Left colon (tissue), 2 donors: ENCODE measurements at regions of chr12 and their contacts with region 1.

Region 1: GRCh38 chr12:34121360-34121759 is 99.1 kb downstream of the ALG10 start:
- DNase-seq: no peak
- ATAC-seq: no peak

Region 2: DNA sequence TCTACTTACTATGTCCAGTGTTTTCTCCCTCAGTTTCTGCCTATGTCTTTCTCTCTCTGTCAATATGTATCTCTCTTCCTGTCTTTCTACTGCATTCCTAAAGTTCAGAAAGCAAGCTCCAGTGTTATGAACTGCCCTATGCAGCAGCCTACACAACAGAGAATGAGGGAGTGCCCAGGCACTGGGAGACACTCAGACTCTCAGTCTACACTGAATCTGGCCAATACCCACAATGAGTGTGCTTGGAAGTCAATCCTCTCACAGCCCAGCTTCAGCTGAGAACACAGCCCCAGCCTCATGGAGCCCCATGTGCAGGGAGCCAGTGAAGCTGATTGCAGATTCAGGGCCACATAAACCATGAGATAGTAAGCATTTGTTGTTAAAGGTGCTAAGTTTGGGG is 29.7 kb after region 1 on chr12:
- intact Hi-C with region 1: no loop called
- DNase-seq: no peak
- ATAC-seq: no peak

Region 3: GRCh38 chr12:34218165-34219045 is 97.0 kb after region 1 on chr12:
- intact Hi-C with region 1: loop called in 1 of 2 experiments (anchors 5 kb)
- DNase-seq: peak in 1 of 2 donors; percentile 59
- ATAC-seq: peak; percentile 74

Region 4: DNA sequence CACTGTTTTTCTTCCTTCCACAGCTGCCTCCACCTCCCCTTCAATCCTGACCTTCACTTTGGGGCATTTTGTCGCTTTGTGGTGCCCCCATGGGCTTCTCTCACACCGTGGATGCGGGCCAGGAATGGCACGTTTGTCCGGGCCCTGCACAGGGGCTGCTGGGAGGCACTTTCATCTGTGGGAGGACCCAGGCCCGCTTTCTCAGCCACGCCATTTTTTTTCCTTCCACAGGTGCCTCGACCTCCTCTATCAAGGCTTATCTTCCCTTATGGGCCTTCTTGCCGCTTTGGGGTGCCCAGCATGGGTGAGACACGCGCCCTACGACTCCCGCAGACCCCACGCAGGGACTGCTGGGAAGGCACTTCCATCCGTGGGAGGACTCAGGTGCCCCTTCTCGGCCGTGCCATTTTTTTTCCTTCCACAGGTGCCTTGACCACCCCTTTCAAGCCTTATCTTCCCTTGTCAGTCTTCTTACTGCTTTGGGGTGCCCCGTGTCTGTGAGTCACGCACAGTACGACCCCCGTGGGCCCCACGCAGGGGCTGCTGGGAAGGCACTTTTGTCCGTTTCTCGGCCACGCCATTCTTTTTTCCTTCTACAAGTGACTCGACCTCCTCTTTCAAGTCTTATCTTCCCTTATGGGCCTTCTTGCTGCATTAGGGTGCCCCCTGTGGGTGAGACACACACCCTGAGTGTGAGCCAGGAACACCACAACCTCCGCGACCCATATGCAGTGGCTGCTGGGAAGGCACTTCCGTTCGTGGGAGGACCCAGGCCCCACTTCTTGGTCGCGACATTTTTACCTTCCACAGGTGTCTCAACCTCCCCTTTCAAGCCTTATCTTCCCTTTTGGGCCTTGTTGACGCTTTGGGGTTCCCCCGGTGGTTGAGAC is 171.6 kb after region 1 on chr12:
- intact Hi-C with region 1: no loop called
- DNase-seq: peak in 1 of 2 donors; percentile 18
- ATAC-seq: no peak